Ascending aorta (tissue), 2 donors: ENCODE measurements at regions of chr13 and their contacts with region 1.

Region 1: DNA sequence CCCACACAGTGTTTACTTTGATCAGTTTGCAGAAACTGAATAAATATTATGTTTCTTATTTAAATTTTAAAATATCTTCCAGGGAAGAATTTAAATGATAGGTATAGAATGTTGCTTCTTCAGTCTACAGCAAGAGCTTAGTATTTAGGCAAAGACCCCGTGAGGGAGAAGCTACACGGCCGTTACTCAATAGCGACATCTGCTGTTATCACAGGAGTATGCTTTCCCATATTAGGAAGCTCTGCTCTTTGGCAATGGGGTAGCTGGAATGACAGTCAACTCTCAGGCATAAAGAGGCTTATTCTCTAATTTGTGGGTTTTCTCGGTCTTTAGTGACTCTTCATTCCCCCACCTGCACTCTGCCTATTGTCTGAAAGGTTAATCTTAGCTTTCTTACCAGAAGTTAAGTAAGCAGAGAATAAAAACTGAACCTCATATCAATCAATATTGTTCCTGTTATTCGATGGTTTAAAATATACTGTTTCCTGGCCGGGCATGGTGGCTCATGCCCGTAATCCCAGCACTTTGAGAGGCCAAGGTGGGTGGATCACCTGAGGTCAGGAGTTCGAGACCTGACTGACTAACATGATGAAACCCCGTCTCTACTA is 13.2 kb upstream of the LHFPL6 start:
- DNase-seq: peak in 1 of 2 donors; percentile 66
- H3K4me3 ChIP-seq: no peak overlapping the region
- H3K27ac ChIP-seq: no peak overlapping the region
- H3K4me1 ChIP-seq: no peaks in the 10 kb centered on the region
- H3K27me3 ChIP-seq: no peaks in the 10 kb centered on the region
- CTCF ChIP-seq: peak; percentile 81 to 95 (median 91)

Region 2: GRCh38 chr13:39037880-39038568 is 578.2 kb before region 1 on chr13 and contains the starts of genes NHLRC3 and PROSER1:
- intact Hi-C with region 1: loop called (anchors 5 kb)
- DNase-seq: peak; percentile 76 to 97
- H3K4me3 ChIP-seq: peak within 1 kb of the TSS; percentile 97 to 100
- H3K27ac ChIP-seq: peak within 1 kb of the TSS; percentile 78 to 88
- H3K4me1 ChIP-seq: peaks cover 0 to 16% of the 10 kb centered on the region in 2 donors
- H3K27me3 ChIP-seq: no peaks in the 10 kb centered on the region
- CTCF ChIP-seq: no peak
- total RNA-seq, gene NHLRC3: 7.1 TPM
- total RNA-seq, gene PROSER1: 60.7 TPM

Region 3: GRCh38 chr13:39051157-39051556 is 565.0 kb before region 1 on chr13:
- intact Hi-C with region 1: loop called (anchors 2 kb)
- DNase-seq: no peak
- H3K4me3 ChIP-seq: no peak overlapping the region
- H3K27ac ChIP-seq: no peak overlapping the region
- H3K4me1 ChIP-seq: no peaks in the 10 kb centered on the region
- H3K27me3 ChIP-seq: no peaks in the 10 kb centered on the region
- CTCF ChIP-seq: peak in 2 of 3 experiments; percentile 31 to 46

Region 4: DNA sequence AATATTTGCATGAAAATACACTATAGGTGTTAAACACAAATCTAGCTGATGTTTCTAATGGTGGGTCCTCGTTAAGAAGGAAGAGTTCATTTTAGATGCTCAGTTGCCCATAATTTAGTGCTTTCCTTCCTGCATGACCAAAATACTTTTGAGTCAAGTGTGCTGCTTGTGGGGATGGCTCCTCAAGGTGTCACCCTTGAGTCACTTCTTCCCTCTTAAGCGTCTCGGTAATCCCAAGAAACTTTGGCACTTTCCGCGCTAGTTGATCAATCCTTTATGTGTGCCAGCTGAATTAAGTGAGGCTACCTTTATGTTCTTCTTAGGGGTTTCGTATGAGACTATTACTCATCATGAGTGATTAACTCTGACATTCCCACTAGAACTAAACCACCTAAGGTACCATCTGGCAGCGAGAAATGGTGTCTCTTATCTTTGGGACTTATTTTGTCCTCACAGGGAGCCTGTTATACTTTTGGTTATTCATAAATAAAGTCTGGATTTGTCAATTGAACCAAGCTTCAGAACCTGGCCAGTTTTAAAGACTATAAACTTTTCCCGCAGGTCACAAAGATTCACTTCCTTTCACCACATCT is 471.2 kb before region 1 on chr13:
- intact Hi-C with region 1: loop called (anchors 1 kb)
- DNase-seq: peak in 1 of 2 donors; percentile 77
- H3K4me3 ChIP-seq: peak overlapping the region; percentile 2 to 57
- H3K27ac ChIP-seq: no peak overlapping the region
- H3K4me1 ChIP-seq: peaks cover 0 to 3% of the 10 kb centered on the region in 2 donors
- H3K27me3 ChIP-seq: no peaks in the 10 kb centered on the region
- CTCF ChIP-seq: peak; percentile 45 to 84 (median 79)